ENCODE measurements at regions of chr16 and their contacts with region 1.

Region 1: GRCh38 chr16:24539291-24539849 is at the start of gene RBBP6:
- DNase-seq: peak; percentile 90 to 96 (median 95)
- ATAC-seq: peak; percentile 96
- H3K4me3 ChIP-seq: peak within 1 kb of the TSS; percentile 82
- H3K4me3 Mint-ChIP-seq: peak within 1 kb of the TSS; percentile 97 to 100 (median 99)
- H3K27ac ChIP-seq: peak within 1 kb of the TSS; percentile 100
- H3K27ac Mint-ChIP-seq: peak within 1 kb of the TSS; percentile 98 to 100 (median 100)
- H3K4me1 ChIP-seq: peaks cover 20 to 34% of the 10 kb centered on the region in 2 donors
- H3K4me1 Mint-ChIP-seq: peaks cover 22 to 50% (median 34%) of the 10 kb centered on the region in 7 donors
- H3K27me3 ChIP-seq: no peaks in the 10 kb centered on the region
- H3K27me3 Mint-ChIP-seq: peaks cover 0 to 2% (median 0%) of the 10 kb centered on the region in 5 donors
- total RNA-seq, gene RBBP6: 70.5 to 137 (median 106) TPM

Region 2: GRCh38 chr16:23452572-23453337 is 1086.6 kb before region 1 on chr16 and contains the start of gene COG7:
- CTCF ChIA-PET with region 1: no interaction called
- POLR2A ChIA-PET with region 1: no interaction called
- intact Hi-C with region 1: loop called in 1 of 2 experiments (anchors 5 kb)
- DNase-seq: peak; percentile 71 to 88 (median 85)
- ATAC-seq: peak; percentile 94
- H3K4me3 ChIP-seq: peak within 1 kb of the TSS; percentile 92
- H3K4me3 Mint-ChIP-seq: peak within 1 kb of the TSS; percentile 88 to 99 (median 93)
- H3K27ac ChIP-seq: peak within 1 kb of the TSS; percentile 78
- H3K27ac Mint-ChIP-seq: peak within 1 kb of the TSS; percentile 87 to 96 (median 91)
- H3K4me1 ChIP-seq: peaks cover 9 to 10% of the 10 kb centered on the region in 2 donors
- H3K4me1 Mint-ChIP-seq: peaks cover 27 to 44% (median 39%) of the 10 kb centered on the region in 7 donors
- H3K27me3 ChIP-seq: no peaks in the 10 kb centered on the region
- H3K27me3 Mint-ChIP-seq: no peaks in the 10 kb centered on the region
- total RNA-seq, gene COG7: 16.1 to 28.4 (median 22.6) TPM

Region 3: GRCh38 chr16:23835390-23836077 is 703.8 kb before region 1 on chr16 and contains the start of gene PRKCB:
- CTCF ChIA-PET with region 1: no interaction called
- POLR2A ChIA-PET with region 1: no interaction called
- intact Hi-C with region 1: loop called in 1 of 2 experiments (anchors 1 kb)
- DNase-seq: peak; percentile 83 to 98 (median 90)
- ATAC-seq: peak; percentile 97
- H3K4me3 ChIP-seq: peak within 1 kb of the TSS; percentile 65
- H3K4me3 Mint-ChIP-seq: peak within 1 kb of the TSS; percentile 88 to 100 (median 98)
- H3K27ac ChIP-seq: peak within 1 kb of the TSS; percentile 65
- H3K27ac Mint-ChIP-seq: peak within 1 kb of the TSS; percentile 69 to 95 (median 85)
- H3K4me1 ChIP-seq: peaks cover 25 to 35% of the 10 kb centered on the region in 2 donors
- H3K4me1 Mint-ChIP-seq: peaks cover 52 to 65% (median 60%) of the 10 kb centered on the region in 7 donors
- H3K27me3 ChIP-seq: no peaks in the 10 kb centered on the region
- H3K27me3 Mint-ChIP-seq: peaks cover 0 to 3% (median 0%) of the 10 kb centered on the region in 5 donors
- total RNA-seq, gene PRKCB: 72.5 to 180 (median 73.1) TPM

Region 4: DNA sequence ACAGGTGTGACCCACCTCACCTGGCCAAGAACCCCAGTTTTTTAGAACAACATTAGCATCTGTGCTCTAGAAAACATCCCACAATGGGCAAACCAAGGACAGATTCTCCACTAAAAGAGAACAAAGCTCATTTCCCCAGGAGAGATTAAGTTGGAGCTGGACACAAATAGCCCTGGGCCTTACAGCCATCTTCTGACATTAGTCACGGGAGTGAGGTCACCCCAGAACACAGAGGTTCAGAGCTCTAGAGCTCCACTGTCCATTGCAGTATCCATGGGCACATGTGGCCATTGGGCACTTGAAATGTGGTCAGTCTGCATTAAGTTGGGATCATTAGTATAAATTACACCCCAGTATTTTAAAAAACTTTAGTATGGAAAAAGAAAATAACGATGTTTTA is 47.6 kb before region 1 on chr16:
- CTCF ChIA-PET with region 1: no interaction called
- POLR2A ChIA-PET with region 1: no interaction called
- intact Hi-C with region 1: no loop called
- DNase-seq: no peak
- ATAC-seq: no peak
- H3K4me3 ChIP-seq: no peak overlapping the region
- H3K4me3 Mint-ChIP-seq: no peak overlapping the region
- H3K27ac ChIP-seq: no peak overlapping the region
- H3K27ac Mint-ChIP-seq: no peak overlapping the region
- H3K4me1 ChIP-seq: no peaks in the 10 kb centered on the region
- H3K4me1 Mint-ChIP-seq: peaks cover 0 to 2% (median 0%) of the 10 kb centered on the region in 7 donors
- H3K27me3 ChIP-seq: no peaks in the 10 kb centered on the region
- H3K27me3 Mint-ChIP-seq: peaks cover 13 to 23% (median 21%) of the 10 kb centered on the region in 5 donors

Region 5: GRCh38 chr16:24668481-24669061 is 129.2 kb after region 1 on chr16:
- CTCF ChIA-PET with region 1: no interaction called
- POLR2A ChIA-PET with region 1: no interaction called
- intact Hi-C with region 1: loop called in 1 of 2 experiments (anchors 10 kb)
- DNase-seq: peak in 1 of 9 donors; percentile 41
- ATAC-seq: no peak
- H3K4me3 ChIP-seq: no peak overlapping the region
- H3K4me3 Mint-ChIP-seq: no peak overlapping the region
- H3K27ac ChIP-seq: no peak overlapping the region
- H3K27ac Mint-ChIP-seq: no peak overlapping the region
- H3K4me1 ChIP-seq: no peaks in the 10 kb centered on the region
- H3K4me1 Mint-ChIP-seq: peaks cover 0 to 20% (median 0%) of the 10 kb centered on the region in 7 donors
- H3K27me3 ChIP-seq: no peaks in the 10 kb centered on the region
- H3K27me3 Mint-ChIP-seq: peaks cover 4 to 27% (median 12%) of the 10 kb centered on the region in 5 donors

Region 6: GRCh38 chr16:25014500-25015147 is 475.3 kb after region 1 on chr16:
- CTCF ChIA-PET with region 1: no interaction called
- POLR2A ChIA-PET with region 1: interaction called, 3 read pairs
- intact Hi-C with region 1: loop called (anchors 5 to 10 kb)
- DNase-seq: peak in 7 of 9 donors; percentile 16 to 39 (median 23)
- ATAC-seq: peak; percentile 26
- H3K4me3 ChIP-seq: peak overlapping the region; percentile 81
- H3K4me3 Mint-ChIP-seq: peak overlapping the region; percentile 83 to 97 (median 94)
- H3K27ac ChIP-seq: peak overlapping the region; percentile 94
- H3K27ac Mint-ChIP-seq: peak overlapping the region; percentile 87 to 98 (median 95)
- H3K4me1 ChIP-seq: peaks cover 24 to 50% of the 10 kb centered on the region in 2 donors
- H3K4me1 Mint-ChIP-seq: peaks cover 59 to 88% (median 76%) of the 10 kb centered on the region in 7 donors
- H3K27me3 ChIP-seq: no peaks in the 10 kb centered on the region
- H3K27me3 Mint-ChIP-seq: no peaks in the 10 kb centered on the region

Region 7: DNA sequence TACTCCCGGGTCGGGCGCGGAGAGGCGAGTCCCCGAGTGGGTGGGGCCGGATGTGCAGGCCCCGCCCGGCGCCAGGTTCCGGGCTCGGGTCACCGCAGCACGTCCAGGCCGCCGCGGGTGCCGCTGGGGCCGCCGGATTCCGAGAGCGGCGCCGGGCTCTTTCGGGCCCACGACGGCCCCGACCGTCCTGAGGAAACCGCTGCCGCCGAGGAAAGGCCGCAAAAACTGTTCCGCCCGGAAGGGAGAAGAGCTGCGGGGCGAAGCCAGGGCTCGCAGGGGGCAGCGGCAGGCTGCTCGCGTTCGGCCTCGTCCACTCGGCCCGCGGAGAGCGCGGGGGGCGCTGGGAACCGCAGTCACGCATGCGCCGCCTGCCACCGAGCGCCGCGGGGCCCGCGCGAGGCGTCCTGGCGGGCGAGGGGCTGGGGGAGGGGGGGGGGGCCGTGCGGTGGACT is 718.2 kb after region 1 on chr16 and contains the start of gene ZKSCAN2:
- CTCF ChIA-PET with region 1: no interaction called
- POLR2A ChIA-PET with region 1: interaction called, 3 read pairs
- intact Hi-C with region 1: loop called (anchors 1 kb)
- DNase-seq: peak; percentile 66 to 90 (median 76)
- ATAC-seq: peak; percentile 89
- H3K4me3 ChIP-seq: peak within 1 kb of the TSS; percentile 90
- H3K4me3 Mint-ChIP-seq: peak within 1 kb of the TSS; percentile 90 to 98 (median 96)
- H3K27ac ChIP-seq: peak within 1 kb of the TSS; percentile 93
- H3K27ac Mint-ChIP-seq: peak within 1 kb of the TSS; percentile 95 to 98 (median 96)
- H3K4me1 ChIP-seq: peaks cover 16 to 39% of the 10 kb centered on the region in 2 donors
- H3K4me1 Mint-ChIP-seq: peaks cover 48 to 74% (median 66%) of the 10 kb centered on the region in 7 donors
- H3K27me3 ChIP-seq: no peaks in the 10 kb centered on the region
- H3K27me3 Mint-ChIP-seq: no peaks in the 10 kb centered on the region
- total RNA-seq, gene ZKSCAN2: 4.7 to 7.0 (median 5.2) TPM

Measured in naive thymus-derived CD4-positive, alpha-beta T cell (primary cell).